ENCODE measurements at regions of chr16 and their contacts with region 1.

Region 1: GRCh38 chr16:50152807-50153452 is at the start of gene TENT4B:
- DNase-seq: peak; percentile 77 to 98 (median 84)

Region 2: DNA sequence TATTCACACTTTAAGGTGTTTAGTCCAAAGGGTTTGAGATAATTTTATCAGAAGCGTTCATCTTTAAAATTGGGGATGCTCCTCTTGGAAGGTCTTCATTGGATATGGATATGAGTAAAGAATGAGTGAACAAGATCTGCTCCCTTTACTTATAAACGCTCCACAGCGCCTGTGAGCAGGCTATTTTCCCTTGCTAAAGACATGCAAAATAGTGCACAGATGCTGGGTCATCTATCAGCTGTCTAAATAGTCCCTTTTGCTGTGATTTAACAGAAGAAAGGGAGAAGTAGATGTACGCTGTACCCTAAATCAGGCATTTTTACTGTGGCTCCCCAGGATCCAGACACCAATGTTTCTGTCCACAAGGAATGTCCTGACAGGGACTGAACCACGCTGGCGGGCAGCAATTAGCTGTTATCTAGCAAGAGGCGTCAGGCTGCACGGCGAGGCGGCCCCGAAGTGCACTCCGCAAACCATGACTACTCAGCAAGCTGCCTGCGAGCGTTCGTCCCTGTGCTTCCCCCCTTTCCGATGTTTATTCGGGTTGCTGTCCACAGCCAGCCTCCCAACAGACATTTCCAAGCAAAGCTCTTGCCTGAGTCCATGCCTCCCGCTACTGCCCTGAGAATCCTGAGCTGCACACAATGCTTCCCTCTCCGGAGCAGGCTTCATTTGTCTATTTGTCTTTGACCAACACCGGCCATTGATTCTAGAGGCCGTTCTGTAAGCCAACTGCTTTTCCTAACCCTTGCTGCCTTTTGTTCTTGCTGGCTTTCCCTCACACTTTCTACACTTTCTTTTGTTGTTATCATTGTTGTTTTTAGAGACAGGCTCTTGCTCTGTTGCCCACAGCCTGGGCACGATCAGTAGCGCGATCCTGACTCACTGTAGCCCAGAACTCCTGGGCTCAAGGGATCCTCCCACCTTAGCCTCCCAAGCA is 183.6 kb before region 1 on chr16:
- intact Hi-C with region 1: no loop called
- DNase-seq: no peak

Region 3: DNA sequence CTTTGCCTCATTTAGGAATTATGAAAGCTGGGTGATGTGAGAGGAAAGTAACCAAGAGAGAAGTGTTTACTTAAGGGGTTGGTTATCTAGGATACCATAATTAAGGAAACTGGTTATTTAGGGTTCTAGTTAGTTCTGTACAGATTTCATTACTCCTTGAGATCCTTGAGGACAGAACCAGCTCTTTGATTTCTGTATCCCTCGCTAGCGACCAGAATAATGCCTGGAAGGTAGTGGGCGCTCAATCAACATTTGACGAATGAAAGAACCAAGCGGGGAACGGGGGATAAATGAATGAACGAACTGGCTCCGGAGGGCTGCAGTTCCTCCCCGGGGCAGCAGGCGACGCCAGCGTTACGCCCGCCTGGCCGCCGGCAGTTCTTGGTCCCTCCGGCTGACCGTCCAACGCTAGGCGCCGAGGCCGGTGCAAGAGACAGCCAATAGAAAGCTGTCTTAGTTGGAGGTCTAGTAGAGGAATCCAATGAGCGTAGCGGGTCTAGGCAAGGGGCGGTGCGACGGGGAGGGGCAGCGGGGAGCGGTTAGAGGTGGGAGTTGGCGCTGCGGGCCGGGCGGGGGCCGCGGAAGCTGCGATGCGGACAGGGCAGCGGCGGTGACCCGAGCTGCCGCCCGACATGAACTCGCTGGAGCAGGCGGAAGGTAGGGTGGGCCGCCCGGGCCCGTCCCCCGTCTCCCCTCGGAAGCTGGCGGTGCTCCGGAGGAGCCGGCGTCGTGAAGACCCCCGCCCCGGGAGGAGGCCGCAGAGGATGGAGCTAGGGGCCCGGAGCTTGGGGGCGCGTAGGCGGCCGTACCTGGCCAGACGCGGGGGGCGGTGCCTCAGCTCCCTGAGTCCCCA is 128.0 kb before region 1 on chr16 and contains the start of gene CNEP1R1:
- intact Hi-C with region 1: loop called (anchors 2 kb)
- DNase-seq: peak; percentile 89 to 99 (median 92)

Region 4: GRCh38 chr16:50065624-50066481 is 87.1 kb before region 1 on chr16 and contains the start of gene HEATR3:
- intact Hi-C with region 1: loop called (anchors 1 kb)
- DNase-seq: peak; percentile 88 to 99 (median 92)

Region 5: DNA sequence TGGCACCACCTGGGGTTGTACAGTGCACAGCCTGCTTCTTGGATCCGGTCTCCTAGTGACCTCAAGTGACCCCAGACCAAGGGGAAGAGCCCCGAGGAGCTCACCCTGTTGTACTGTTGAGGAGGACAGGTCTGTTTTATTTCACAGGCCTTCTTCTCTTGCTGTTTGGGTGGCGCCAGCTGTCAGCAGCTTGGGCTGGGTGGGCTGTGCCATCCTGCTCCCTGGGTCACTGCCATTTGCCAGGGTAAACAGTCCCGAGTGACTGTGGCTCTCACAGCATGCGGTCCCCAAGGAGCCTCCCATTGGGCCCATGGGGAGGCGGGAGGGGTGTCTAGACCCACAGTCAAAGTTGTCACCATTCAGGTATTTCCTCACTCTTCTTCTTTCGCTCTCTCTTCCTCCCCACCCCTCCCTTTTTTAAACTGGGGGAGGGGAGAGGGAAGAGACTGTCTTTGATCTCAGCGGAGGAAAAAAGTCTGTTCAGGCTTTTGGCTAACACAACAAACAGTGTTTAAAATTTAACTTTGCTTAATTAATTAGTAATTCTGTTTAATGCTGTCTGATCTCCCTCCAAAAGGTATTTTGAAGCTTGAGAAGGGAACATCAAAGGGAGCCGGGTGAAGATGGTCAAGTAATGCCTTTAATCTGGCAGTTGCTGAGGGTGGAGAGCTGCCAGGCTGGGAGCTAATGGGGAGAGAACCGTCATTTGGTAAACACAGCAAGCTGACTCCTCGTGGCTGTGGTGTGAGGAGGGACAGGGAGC is 464.1 kb after region 1 on chr16:
- intact Hi-C with region 1: no loop called
- DNase-seq: peak in 1 of 10 donors; percentile 25

Measured in posterior cingulate gyrus (tissue), 11 donors.